Activated CD8-positive, alpha-beta memory T cell treated with anti-CD3 and anti-CD28 coated beads, Interleukin-2, amount 10 ng/mL, durations not matched to agents 7 days and 5 days (primary cell): ENCODE measurements at regions of chr1 and their contacts with region 1.

Region 1: GRCh38 chr1:197902454-197903195 is at the start of gene C1orf53:
- DNase-seq: peak; percentile 82
- ATAC-seq: peak; percentile 97
- H3K4me3 Mint-ChIP-seq: peak within 1 kb of the TSS; percentile 81
- H3K27ac Mint-ChIP-seq: peak within 1 kb of the TSS; percentile 78
- H3K4me1 Mint-ChIP-seq: peaks cover 16% of the 10 kb centered on the region
- H3K27me3 Mint-ChIP-seq: peaks cover 54% of the 10 kb centered on the region
- total RNA-seq, gene C1orf53: 0.55 to 2.5 TPM

Region 2: DNA sequence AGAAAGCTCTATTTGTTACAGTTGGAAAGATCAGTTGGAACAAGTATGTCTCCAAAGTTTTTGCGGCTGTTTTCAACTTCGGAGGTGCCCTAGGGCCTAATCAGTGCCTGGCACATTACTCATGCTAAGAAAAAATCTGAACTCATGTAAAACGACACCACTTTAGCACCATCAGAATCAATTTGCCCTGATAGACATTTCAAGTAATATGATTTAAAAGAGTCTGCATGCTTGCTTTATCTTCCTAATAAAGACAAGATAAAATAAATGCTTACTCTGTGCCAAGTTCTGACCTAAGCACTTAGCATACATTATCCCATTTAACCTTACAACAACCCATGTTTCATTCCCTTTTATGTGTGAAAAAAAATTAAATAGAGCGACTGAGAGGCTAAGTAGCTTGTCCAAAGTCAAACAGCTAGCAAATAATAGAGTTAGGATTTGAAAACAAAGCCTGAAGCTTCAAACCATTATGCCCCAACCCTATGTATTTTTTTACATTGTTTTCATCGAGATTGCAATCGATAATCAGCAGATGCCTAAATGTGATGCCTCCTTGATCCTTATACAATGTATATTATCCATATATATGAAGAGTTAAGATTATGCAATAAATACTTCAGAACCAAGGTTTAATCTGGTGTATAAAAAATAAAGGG is 218.6 kb before region 1 on chr1:
- CTCF ChIA-PET with region 1: no interaction called
- DNase-seq: no peak
- ATAC-seq: no peak
- H3K4me3 Mint-ChIP-seq: no peak overlapping the region
- H3K27ac Mint-ChIP-seq: no peak overlapping the region
- H3K4me1 Mint-ChIP-seq: peaks cover 9% of the 10 kb centered on the region
- H3K27me3 Mint-ChIP-seq: no peaks in the 10 kb centered on the region

Region 3: GRCh38 chr1:197915862-197916499 is 13.4 kb after region 1 on chr1:
- CTCF ChIA-PET with region 1: interaction called, 50 read pairs
- DNase-seq: no peak
- ATAC-seq: no peak
- H3K4me3 Mint-ChIP-seq: peak overlapping the region; percentile 71
- H3K27ac Mint-ChIP-seq: no peak overlapping the region
- H3K4me1 Mint-ChIP-seq: peaks cover 73% of the 10 kb centered on the region
- H3K27me3 Mint-ChIP-seq: peaks cover 99% of the 10 kb centered on the region

Region 4: GRCh38 chr1:197924516-197925123 is 22.0 kb after region 1 on chr1:
- CTCF ChIA-PET with region 1: interaction called, 50 read pairs
- DNase-seq: no peak
- ATAC-seq: peak; percentile 40
- H3K4me3 Mint-ChIP-seq: no peak overlapping the region
- H3K27ac Mint-ChIP-seq: no peak overlapping the region
- H3K4me1 Mint-ChIP-seq: peaks cover 19% of the 10 kb centered on the region
- H3K27me3 Mint-ChIP-seq: peaks cover 73% of the 10 kb centered on the region